Endothelial cell of umbilical vein (primary cell): ENCODE measurements at regions of chr6 and their contacts with region 1.

Region 1: GRCh38 chr6:35876902-35877301 is 44.0 kb downstream of the SRPK1 start:
- DNase-seq: peak; percentile 4
- H3K4me3 ChIP-seq: no peak overlapping the region
- H3K27ac ChIP-seq: no peak overlapping the region
- H3K4me1 ChIP-seq: no peaks in the 10 kb centered on the region
- H3K27me3 ChIP-seq: no peaks in the 10 kb centered on the region
- CTCF ChIP-seq: no peak
- POLR2A ChIP-seq: no peak

Region 2: DNA sequence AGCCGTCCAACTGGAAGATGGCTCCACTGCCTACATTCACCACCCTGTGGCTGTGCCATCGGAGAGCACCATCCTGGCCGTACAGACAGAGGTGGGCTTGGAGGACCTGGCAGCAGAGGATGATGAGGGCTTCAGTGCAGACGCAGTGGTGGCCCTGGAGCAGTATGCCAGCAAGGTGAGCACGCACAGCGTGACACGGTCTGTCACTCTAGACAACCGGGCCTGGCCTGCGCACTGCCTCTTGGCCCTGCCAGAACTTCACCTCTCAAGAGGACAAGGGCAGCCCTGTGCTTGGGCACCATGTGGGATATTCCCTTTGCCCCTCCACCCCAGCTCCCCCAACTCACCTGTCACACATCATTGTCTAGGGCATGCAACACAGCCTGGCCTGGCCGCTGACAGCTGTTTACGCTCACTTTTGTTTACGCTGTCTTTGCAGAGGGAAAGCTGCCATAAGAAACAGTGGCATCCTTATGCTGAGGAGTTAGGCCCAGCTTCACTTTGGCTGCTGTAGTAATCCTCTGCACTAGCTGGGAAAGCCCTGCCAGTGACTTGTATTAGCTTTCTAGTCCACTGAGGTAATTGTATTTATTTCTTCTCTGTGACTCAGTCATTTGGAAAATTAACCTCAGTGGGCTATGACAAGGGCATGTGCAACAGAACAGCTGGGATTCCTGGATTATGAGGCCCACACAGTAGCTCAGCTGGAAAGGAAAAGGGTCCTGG is 589.1 kb before region 1 on chr6:
- CTCF ChIA-PET with region 1: no interaction called
- POLR2A ChIA-PET with region 1: no interaction called
- dilution Hi-C with region 1: no loop called
- intact Hi-C with region 1: no loop called
- DNase-seq: no peak
- H3K4me3 ChIP-seq: no peak overlapping the region
- H3K27ac ChIP-seq: no peak overlapping the region
- H3K4me1 ChIP-seq: no peaks in the 10 kb centered on the region
- H3K27me3 ChIP-seq: no peaks in the 10 kb centered on the region
- CTCF ChIP-seq: no peak
- POLR2A ChIP-seq: no peak

Region 3: DNA sequence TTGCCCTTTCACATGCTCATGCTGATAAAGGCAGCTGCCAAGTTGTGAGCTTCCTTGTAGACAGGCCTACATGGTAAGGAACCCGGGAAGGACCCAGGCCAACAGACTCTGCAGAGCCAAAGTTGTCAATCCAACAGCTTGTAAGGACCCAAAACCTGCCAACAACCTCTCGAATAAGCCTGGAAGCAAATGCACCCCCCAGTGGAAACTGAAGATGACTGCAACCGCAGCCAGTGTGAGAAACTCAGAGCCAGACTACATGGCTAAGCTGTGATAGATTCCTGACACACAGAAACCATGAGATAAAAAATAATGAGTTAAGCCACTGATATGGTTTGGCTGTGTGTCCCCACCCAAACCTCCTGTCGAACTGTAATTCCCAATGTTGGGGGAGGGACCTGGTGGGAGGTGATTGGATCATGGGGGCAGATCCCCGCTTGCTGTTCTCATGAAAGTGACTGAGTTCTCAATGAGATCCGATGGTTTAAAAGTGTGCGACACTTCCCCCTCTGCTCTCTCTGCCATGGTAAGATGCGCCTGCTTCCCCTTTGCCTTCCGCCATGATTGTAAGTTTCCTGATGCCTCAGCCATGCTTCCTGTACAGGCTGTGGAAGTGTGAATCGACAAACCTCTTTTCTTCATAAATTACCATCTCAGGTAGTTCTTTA is 119.3 kb before region 1 on chr6:
- CTCF ChIA-PET with region 1: no interaction called
- POLR2A ChIA-PET with region 1: no interaction called
- dilution Hi-C with region 1: no loop called
- intact Hi-C with region 1: no loop called
- DNase-seq: peak; percentile 32
- H3K4me3 ChIP-seq: no peak overlapping the region
- H3K27ac ChIP-seq: no peak overlapping the region
- H3K4me1 ChIP-seq: no peaks in the 10 kb centered on the region
- H3K27me3 ChIP-seq: peaks cover 0 to 10% of the 10 kb centered on the region in 2 experiments
- CTCF ChIP-seq: peak; percentile 20 to 55
- POLR2A ChIP-seq: no peak

Region 4: GRCh38 chr6:36094753-36095496 is 218.0 kb after region 1 on chr6:
- CTCF ChIA-PET with region 1: no interaction called
- POLR2A ChIA-PET with region 1: no interaction called
- dilution Hi-C with region 1: no loop called
- intact Hi-C with region 1: loop called (anchors 10 kb)
- DNase-seq: peak; percentile 83
- H3K4me3 ChIP-seq: no peak overlapping the region
- H3K27ac ChIP-seq: no peak overlapping the region
- H3K4me1 ChIP-seq: peaks cover 8% of the 10 kb centered on the region
- H3K27me3 ChIP-seq: no peaks in the 10 kb centered on the region
- CTCF ChIP-seq: peak; percentile 93 to 94
- POLR2A ChIP-seq: no peak